PC-9 (cell line): ENCODE measurements at regions of chrX and their contacts with region 1.

Region 1: DNA sequence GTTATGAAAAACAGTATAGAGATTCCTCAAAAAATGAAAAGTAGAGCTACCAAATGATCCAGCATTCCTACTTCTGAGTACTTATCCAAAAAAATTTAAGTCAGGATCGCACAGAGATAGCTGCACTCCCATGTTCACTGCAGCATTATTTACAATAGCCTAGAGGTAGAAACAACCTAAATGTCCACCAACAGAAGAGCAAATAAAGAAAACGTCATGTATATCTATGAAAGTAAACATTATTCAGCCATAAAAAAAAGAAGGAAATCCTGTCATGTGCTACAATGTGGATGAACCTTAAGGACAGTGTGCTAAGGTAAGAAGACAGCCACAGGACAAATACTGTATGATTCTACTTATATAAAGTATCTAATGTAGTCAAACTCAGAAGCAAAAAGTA is 12.4 kb downstream of the THOC2 start:
- DNase-seq: no peak
- H3K4me3 ChIP-seq: no peak overlapping the region
- H3K27ac ChIP-seq: no peak overlapping the region; the same call in 1 of the 2 replicates
- H3K4me1 ChIP-seq: no peaks in the 10 kb centered on the region
- H3K27me3 ChIP-seq: no peaks in the 10 kb centered on the region
- CTCF ChIP-seq: no peak

Region 2: GRCh38 chrX:122552333-122552732 is 1168.2 kb before region 1 on chrX:
- CTCF ChIA-PET with region 1: no interaction called
- POLR2A ChIA-PET with region 1: no interaction called
- intact Hi-C with region 1: no loop called
- DNase-seq: no peak
- H3K4me3 ChIP-seq: no peak overlapping the region
- H3K27ac ChIP-seq: no peak overlapping the region
- H3K4me1 ChIP-seq: no peaks in the 10 kb centered on the region
- H3K27me3 ChIP-seq: no peaks in the 10 kb centered on the region
- CTCF ChIP-seq: no peak

Region 3: DNA sequence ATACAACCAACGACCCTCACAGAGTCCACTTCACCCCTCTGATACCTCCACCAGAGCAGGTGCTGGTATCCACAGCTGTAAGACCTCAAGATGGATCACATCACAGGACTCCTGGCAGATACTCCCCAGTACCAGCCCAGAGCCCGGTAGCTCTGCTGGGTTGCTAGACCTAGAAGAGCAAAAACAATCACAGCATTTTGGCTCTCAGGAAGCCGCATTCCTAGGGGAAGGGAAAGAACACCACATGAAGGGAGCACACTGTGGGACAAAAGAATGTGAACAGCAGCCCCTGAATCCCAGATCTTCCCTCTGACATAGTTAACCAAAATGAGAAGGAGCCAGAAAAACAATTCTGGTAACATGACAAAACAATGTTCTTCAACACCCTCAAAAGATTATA is 839.5 kb before region 1 on chrX:
- CTCF ChIA-PET with region 1: no interaction called
- POLR2A ChIA-PET with region 1: no interaction called
- intact Hi-C with region 1: no loop called
- DNase-seq: no peak
- H3K4me3 ChIP-seq: no peak overlapping the region
- H3K27ac ChIP-seq: no peak overlapping the region
- H3K4me1 ChIP-seq: no peaks in the 10 kb centered on the region
- H3K27me3 ChIP-seq: no peaks in the 10 kb centered on the region
- CTCF ChIP-seq: no peak

Region 4: DNA sequence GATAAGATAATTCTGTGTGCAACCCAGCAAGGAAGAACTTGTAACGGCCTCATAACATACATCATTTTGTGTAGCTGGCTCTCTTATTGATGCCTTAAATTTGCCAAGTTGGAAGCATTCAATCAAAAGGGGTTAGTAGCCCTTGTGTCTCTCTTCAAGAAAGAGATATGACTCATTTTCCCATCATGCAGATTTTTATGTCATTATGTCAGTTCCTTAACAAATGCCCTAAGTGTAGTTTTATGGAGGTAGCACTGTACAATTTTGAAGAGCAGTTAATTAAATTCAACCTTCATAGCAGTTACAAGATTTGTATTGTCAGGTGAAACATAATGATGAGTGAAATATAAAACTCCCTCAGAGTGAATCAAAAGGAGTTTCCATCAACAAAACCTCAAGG is 320.8 kb before region 1 on chrX:
- CTCF ChIA-PET with region 1: no interaction called
- POLR2A ChIA-PET with region 1: no interaction called
- intact Hi-C with region 1: no loop called
- DNase-seq: no peak
- H3K4me3 ChIP-seq: no peak overlapping the region
- H3K27ac ChIP-seq: no peak overlapping the region
- H3K4me1 ChIP-seq: no peaks in the 10 kb centered on the region
- H3K27me3 ChIP-seq: no peaks in the 10 kb centered on the region
- CTCF ChIP-seq: no peak

Region 5: DNA sequence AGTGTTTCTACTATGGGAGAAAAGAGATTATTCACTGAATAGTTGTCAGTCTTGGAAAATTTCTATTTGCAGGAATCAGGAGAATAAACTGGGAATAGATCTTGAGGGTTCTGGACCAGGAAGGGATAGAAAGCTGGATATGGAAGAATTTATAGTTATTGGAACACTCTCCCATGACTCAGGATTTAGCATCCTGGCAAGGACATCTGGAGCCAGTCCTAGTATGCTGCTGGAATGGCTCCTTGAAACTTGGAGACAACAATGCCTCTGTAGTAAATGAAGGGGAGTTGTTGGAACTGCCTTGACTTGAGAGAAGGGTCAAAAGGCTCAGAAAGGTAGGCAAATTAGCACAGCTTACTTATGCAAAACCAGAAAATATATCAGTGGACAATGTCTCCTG is 35.8 kb after region 1 on chrX:
- CTCF ChIA-PET with region 1: interaction called, 12 read pairs
- POLR2A ChIA-PET with region 1: no interaction called
- intact Hi-C with region 1: no loop called
- DNase-seq: no peak
- H3K4me3 ChIP-seq: no peak overlapping the region
- H3K27ac ChIP-seq: no peak overlapping the region
- H3K4me1 ChIP-seq: no peaks in the 10 kb centered on the region
- H3K27me3 ChIP-seq: no peaks in the 10 kb centered on the region
- CTCF ChIP-seq: no peak